ENCODE measurements at regions of chr21 and their contacts with region 1.

Region 1: GRCh38 chr21:45130324-45130774 is 56.0 kb downstream of the ADARB1 start:
- DNase-seq: no peak
- H3K4me3 ChIP-seq: peak overlapping the region; percentile 30 to 58; a peak in 3 of 4 replicates
- H3K27ac ChIP-seq: peak overlapping the region; percentile 62 to 74; a peak in 3 of 4 replicates
- H3K4me1 ChIP-seq: peaks cover 8 to 22% of the 10 kb centered on the region in 2 experiments
- H3K27me3 ChIP-seq: no peaks in the 10 kb centered on the region
- CTCF ChIP-seq: no peak
- EP300 ChIP-seq: no peak
- RAD21 ChIP-seq: no peak

Region 2: GRCh38 chr21:44892536-44893277 is 237.6 kb before region 1 on chr21:
- CTCF ChIA-PET with region 1: interaction called, 16 read pairs
- POLR2A ChIA-PET with region 1: no interaction called
- DNase-seq: peak; percentile 86
- H3K4me3 ChIP-seq: peak overlapping the region in 1 of 2 experiments; percentile 50; a peak in 1 of 4 replicates
- H3K27ac ChIP-seq: no peak overlapping the region
- H3K4me1 ChIP-seq: peaks cover 0 to 5% of the 10 kb centered on the region in 2 experiments; a peak in 1 of 4 replicates
- H3K27me3 ChIP-seq: peaks cover 5% of the 10 kb centered on the region; the same call in 1 of the 2 replicates
- CTCF ChIP-seq: peak; percentile 94
- EP300 ChIP-seq: no peak
- RAD21 ChIP-seq: peak; percentile 70

Region 3: DNA sequence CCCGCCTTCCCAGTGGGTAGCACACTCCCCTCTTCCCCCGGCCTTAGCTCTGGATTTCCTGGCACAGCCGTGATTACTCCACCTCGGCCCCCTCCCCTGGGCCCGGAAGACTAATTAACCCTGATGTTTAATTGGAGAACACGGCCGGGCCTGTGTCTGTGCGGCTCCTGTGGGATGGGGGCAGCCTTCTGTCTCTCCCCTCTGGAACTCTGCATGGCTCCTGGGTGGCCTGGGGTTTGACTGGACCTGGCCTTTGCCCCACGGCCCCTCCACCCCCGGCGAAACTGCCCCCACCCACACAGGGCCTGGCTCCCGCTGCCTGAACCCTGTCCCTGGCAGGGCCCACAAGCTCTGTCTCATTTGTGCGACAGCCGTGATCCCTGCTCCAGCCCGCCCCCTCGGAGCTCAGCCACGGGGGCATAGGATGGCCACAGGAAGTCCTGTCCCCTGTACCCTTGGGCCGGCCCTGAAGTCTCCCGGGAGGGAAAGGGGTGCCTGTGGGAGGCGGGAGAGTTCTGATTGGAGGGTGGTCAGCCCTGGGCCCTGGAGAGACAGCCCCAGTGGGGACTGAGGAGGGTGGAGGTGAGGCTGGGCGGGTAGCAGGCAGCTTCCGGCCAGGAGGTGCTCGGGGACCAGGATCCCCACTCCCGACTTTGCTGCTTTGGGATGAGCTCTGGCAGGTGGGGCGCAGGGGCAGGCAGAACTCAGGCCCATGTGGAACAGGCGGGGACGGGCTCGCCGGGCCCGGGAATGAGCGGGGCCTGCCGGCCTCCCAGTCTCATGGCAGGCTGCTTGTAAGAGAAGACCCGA is 145.5 kb before region 1 on chr21:
- CTCF ChIA-PET with region 1: interaction called, 15 read pairs
- POLR2A ChIA-PET with region 1: no interaction called
- DNase-seq: peak; percentile 76
- H3K4me3 ChIP-seq: no peak overlapping the region
- H3K27ac ChIP-seq: peak overlapping the region in 1 of 2 experiments; percentile 75; a peak in 2 of 4 replicates
- H3K4me1 ChIP-seq: peaks cover 0 to 68% of the 10 kb centered on the region in 2 experiments; a peak in 3 of 4 replicates
- H3K27me3 ChIP-seq: no peaks in the 10 kb centered on the region
- CTCF ChIP-seq: no peak
- EP300 ChIP-seq: no peak
- RAD21 ChIP-seq: no peak

Region 4: DNA sequence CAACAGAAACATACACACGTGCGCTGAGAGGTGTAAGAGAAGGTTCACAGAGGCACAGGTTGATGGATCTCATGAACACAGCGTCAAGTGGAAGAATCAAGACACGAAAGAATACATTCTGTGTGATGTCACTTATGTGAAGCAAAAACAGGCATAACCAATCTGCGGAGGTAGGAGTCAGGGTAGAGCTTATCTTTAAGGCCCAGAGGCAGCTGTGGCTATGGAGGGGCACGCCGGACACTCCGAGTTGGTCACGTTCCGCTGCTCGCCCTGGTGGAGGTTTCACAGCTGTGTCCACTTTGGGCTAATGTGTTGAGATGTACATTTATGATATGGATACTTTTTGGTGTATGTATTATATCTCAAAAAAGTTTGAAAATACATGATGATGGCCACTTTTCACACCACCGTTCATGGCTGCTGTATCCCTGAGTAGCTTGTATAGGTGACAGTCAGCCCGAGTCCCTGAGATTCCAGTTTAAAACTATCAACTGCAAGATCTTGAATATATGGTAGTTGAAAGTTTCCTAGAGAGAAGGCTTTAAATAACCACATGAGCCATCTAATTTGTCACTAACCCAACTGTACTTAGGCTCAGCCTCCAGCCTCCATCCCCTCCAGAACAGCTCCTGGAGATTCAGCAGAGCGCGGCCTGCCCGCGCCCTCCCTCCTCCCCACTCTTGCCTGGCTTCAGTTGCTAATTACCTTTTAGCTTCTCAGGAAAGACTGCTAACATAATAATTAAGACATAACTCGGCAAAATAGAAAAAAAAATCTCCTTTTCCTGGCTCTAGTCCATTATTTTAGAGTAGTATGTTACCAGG is 62.7 kb before region 1 on chr21:
- CTCF ChIA-PET with region 1: interaction called, 13 read pairs
- POLR2A ChIA-PET with region 1: no interaction called
- DNase-seq: peak; percentile 88
- H3K4me3 ChIP-seq: no peak overlapping the region
- H3K27ac ChIP-seq: peak overlapping the region in 1 of 2 experiments; percentile 73; a peak in 2 of 4 replicates
- H3K4me1 ChIP-seq: peaks cover 0 to 21% of the 10 kb centered on the region in 2 experiments; a peak in 2 of 4 replicates
- H3K27me3 ChIP-seq: no peaks in the 10 kb centered on the region
- CTCF ChIP-seq: no peak
- EP300 ChIP-seq: peak in 1 of 2 experiments; percentile 24; a peak in 1 of 4 replicates
- RAD21 ChIP-seq: no peak

Region 5: GRCh38 chr21:45098867-45099266 is 31.5 kb before region 1 on chr21:
- CTCF ChIA-PET with region 1: interaction called, 78 read pairs
- POLR2A ChIA-PET with region 1: no interaction called
- DNase-seq: peak; percentile 54
- H3K4me3 ChIP-seq: no peak overlapping the region
- H3K27ac ChIP-seq: no peak overlapping the region
- H3K4me1 ChIP-seq: peaks cover 20 to 52% of the 10 kb centered on the region in 2 experiments; a peak in 3 of 4 replicates
- H3K27me3 ChIP-seq: no peaks in the 10 kb centered on the region
- CTCF ChIP-seq: peak; percentile 46
- EP300 ChIP-seq: no peak
- RAD21 ChIP-seq: peak; percentile 45

Region 6: DNA sequence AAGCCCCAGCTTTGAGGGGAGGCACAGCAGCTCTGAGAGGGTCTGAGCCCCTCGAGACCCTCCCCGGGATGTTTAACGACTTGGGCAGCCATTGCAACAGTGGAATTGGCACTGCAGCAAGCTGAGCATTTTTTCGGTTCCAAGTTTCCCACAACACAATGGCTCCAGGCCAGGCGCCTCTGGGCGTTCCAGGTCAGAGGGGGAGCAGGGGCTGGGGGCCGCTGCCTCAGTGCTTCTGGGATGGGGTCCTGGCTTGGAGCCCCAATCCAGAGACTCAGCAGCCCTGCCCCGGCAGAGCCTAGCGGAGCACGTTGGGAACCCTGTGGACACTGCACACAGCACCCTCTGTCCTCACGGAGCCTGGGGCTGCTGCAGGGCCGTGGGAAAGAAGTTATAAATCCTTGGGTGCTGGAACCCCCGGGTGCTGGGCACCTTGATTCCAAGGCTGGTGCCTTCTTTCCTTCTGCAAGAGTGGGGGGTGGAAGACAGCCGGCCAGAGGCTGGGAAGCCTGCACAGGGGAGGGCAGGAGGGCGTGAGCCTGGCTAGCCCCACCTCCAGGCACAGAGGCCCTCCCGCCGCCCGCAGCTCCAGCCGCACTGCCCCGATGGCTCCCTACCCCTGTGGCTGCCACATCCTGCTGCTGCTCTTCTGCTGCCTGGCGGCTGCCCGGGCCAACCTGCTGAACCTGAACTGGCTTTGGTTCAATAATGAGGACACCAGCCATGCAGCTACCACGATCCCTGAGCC is 324.8 kb after region 1 on chr21:
- CTCF ChIA-PET with region 1: no interaction called
- POLR2A ChIA-PET with region 1: no interaction called
- DNase-seq: no peak
- H3K4me3 ChIP-seq: no peak overlapping the region
- H3K27ac ChIP-seq: no peak overlapping the region
- H3K4me1 ChIP-seq: peaks cover 0 to 13% of the 10 kb centered on the region in 2 experiments; a peak in 1 of 4 replicates
- H3K27me3 ChIP-seq: no peaks in the 10 kb centered on the region
- CTCF ChIP-seq: no peak
- EP300 ChIP-seq: no peak
- RAD21 ChIP-seq: no peak

Measured in SK-N-SH (cell line).